ENCODE measurements at regions of chr14 and their contacts with region 1.

Region 1: GRCh38 chr14:22276913-22277816 is 311.9 kb downstream of the DAD1 start:
- DNase-seq: peak; percentile 74
- ATAC-seq: no peak
- H3K4me3 ChIP-seq: no peak overlapping the region
- H3K27ac ChIP-seq: no peak overlapping the region
- H3K4me1 ChIP-seq: no peaks in the 10 kb centered on the region
- H3K27me3 ChIP-seq: no peaks in the 10 kb centered on the region
- CTCF ChIP-seq: peak; percentile 89

Region 2: DNA sequence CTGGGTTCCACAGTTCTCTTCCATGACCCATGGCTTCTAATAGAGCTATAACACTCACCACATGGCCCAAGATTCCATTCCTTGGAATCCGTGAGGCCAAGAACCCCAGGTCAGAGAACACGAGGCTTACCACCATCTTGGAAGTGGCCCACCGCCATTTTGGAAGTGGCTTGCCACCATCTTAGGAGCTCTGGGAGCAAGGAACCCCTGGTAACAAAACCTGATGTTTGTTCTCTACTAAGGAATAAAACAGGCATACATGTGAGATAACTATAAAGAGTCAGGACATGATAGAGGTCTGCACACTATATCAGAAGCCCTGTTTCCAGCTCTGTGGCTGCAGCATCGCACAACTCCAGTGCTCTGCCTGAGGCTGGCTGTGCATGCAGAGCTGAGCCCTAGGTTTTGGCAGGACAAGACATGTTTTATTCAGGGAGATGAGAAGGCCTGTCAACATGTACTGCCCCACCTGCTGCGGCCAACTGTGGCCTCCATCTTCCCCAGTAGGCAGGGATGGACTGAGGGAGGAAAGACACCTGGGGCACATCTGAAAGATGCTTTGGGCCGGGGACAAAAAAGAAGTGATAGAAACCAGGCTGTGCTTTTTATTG is 33.1 kb before region 1 on chr14:
- CTCF ChIA-PET with region 1: no interaction called
- POLR2A ChIA-PET with region 1: no interaction called
- intact Hi-C with region 1: no loop called
- DNase-seq: no peak
- ATAC-seq: no peak
- H3K4me3 ChIP-seq: no peak overlapping the region
- H3K27ac ChIP-seq: no peak overlapping the region
- H3K4me1 ChIP-seq: peaks cover 6% of the 10 kb centered on the region; the same call in 1 of the 2 replicates
- H3K27me3 ChIP-seq: no peaks in the 10 kb centered on the region
- CTCF ChIP-seq: no peak

Region 3: DNA sequence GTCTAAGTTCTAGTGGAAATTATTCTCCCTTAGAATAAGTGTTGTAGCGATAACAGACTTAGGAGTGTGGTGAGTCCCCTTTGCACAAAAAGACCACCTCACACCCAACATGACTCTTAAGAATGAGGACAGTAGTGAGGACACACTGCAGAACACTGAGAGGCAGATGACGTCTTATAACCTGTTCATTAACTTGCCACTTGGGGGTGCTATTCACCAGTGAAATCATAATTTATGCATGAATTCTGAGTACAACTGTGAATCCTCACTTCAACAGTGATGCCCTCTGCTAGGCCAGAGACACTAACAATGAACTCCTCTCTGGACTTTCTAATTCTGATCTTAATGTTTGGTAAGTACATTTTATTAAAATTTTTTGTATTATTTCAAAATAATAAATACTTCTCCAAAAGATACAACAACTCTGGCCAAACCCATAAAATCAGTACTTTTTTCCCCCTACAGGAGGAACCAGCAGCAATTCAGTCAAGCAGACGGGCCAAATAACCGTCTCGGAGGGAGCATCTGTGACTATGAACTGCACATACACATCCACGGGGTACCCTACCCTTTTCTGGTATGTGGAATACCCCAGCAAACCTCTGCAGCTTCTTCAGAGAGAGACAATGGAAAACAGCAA is 37.1 kb after region 1 on chr14:
- CTCF ChIA-PET with region 1: interaction called, 3 read pairs
- POLR2A ChIA-PET with region 1: no interaction called
- intact Hi-C with region 1: loop called (anchors 1 kb)
- DNase-seq: peak; percentile 88
- ATAC-seq: peak; percentile 52
- H3K4me3 ChIP-seq: no peak overlapping the region
- H3K27ac ChIP-seq: no peak overlapping the region
- H3K4me1 ChIP-seq: peaks cover 29% of the 10 kb centered on the region
- H3K27me3 ChIP-seq: no peaks in the 10 kb centered on the region
- CTCF ChIP-seq: peak; percentile 81

Region 4: GRCh38 chr14:22375321-22375930 is 98.3 kb after region 1 on chr14:
- CTCF ChIA-PET with region 1: no interaction called
- POLR2A ChIA-PET with region 1: no interaction called
- intact Hi-C with region 1: loop called (anchors 1 kb)
- DNase-seq: peak; percentile 87
- ATAC-seq: peak; percentile 56; the same call in 1 of the 2 replicates
- H3K4me3 ChIP-seq: no peak overlapping the region
- H3K27ac ChIP-seq: no peak overlapping the region
- H3K4me1 ChIP-seq: peaks cover 26% of the 10 kb centered on the region
- H3K27me3 ChIP-seq: no peaks in the 10 kb centered on the region
- CTCF ChIP-seq: peak; percentile 85